OCI-LY7 (cell line): ENCODE measurements at regions of chr12 and their contacts with region 1.

Region 1: GRCh38 chr12:66548338-66549049 is 130.4 kb downstream of the GRIP1 start:
- DNase-seq: peak; percentile 59
- H3K4me3 ChIP-seq: no peak overlapping the region
- H3K27ac ChIP-seq: no peak overlapping the region
- H3K4me1 ChIP-seq: peaks cover 34% of the 10 kb centered on the region
- CTCF ChIP-seq: peak; percentile 86

Region 2: DNA sequence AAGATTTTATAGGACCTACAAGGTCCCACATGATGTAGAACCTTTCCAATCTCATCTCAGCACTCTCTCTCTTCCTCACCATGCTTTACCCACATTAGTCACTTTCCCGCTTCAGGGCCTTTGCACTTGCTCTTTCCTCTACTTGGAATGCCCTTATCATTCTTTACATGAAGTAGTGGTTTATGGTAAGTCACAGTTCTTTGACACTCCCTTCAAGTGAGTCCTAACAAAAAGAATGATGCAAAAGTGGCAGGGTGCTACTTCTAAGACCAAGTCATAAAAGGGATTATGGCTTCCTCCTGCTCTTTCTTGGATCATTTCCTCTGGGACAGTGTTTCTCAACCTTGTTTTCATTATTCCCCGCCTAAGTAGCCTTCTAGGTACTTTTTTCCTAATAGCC is 391.8 kb before region 1 on chr12:
- CTCF ChIA-PET with region 1: no interaction called
- POLR2A ChIA-PET with region 1: no interaction called
- intact Hi-C with region 1: no loop called
- DNase-seq: no peak
- H3K4me3 ChIP-seq: no peak overlapping the region
- H3K27ac ChIP-seq: no peak overlapping the region
- H3K4me1 ChIP-seq: no peaks in the 10 kb centered on the region
- CTCF ChIP-seq: no peak

Region 3: GRCh38 chr12:66679461-66680084 is 131.1 kb after region 1 on chr12:
- CTCF ChIA-PET with region 1: no interaction called
- POLR2A ChIA-PET with region 1: interaction called, 5 read pairs
- intact Hi-C with region 1: loop called (anchors 2 kb)
- DNase-seq: no peak
- H3K4me3 ChIP-seq: no peak overlapping the region
- H3K27ac ChIP-seq: no peak overlapping the region
- H3K4me1 ChIP-seq: peaks cover 3% of the 10 kb centered on the region
- CTCF ChIP-seq: no peak